ENCODE measurements at regions of chr6 and their contacts with region 1.

Region 1: GRCh38 chr6:131116749-131117360 is 18.4 kb upstream of the AKAP7 start:
- DNase-seq: no peak
- H3K4me3 ChIP-seq: no peak overlapping the region
- H3K27ac ChIP-seq: no peak overlapping the region
- H3K4me1 ChIP-seq: peaks cover 0 to 4% (median 0%) of the 10 kb centered on the region in 4 donors
- H3K27me3 ChIP-seq: no peaks in the 10 kb centered on the region
- CTCF ChIP-seq: peak; percentile 40 to 53 (median 44)
- EP300 ChIP-seq: no peak
- POLR2A ChIP-seq: no peak

Region 2: DNA sequence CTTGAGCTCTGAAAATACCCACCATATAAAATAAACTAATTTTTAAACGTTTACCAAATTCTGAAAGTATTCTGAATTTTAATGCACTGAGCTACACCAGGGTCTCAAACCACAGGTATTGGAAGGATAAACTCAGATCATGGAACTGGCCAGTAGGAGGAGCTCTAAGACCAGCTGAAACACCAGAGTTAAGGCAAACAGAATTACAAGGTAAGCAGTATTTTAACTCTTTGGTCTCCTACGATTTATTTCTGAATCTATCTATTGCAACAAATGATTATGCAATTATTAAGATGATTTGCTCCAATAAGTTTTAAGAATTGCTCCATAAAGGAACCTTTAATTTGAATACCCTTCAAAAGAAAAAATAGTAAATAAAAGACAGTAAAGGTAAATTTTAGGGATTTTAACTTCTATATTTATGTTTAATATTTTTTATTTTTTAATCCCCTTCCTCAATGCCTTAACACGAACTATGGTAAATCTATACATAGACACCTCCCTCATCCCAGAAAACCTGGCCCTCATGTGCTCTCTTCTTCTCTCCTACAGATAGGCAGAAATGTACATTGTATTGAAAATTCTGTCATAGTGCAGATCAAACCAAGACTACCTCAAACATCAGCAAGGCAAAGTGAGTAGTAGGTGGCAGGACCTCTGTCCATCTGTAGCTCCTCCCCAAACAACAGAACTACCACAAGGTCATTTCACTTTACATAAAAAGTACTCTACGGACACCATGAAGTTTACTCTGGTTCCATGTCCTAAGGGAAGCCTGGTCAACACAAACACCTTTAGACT is 231.3 kb before region 1 on chr6:
- intact Hi-C with region 1: loop called (anchors 2 kb)
- DNase-seq: no peak
- H3K4me3 ChIP-seq: no peak overlapping the region
- H3K27ac ChIP-seq: no peak overlapping the region
- H3K4me1 ChIP-seq: no peaks in the 10 kb centered on the region
- H3K27me3 ChIP-seq: no peaks in the 10 kb centered on the region
- CTCF ChIP-seq: peak; percentile 85 to 88 (median 86)
- EP300 ChIP-seq: no peak
- POLR2A ChIP-seq: no peak

Region 3: GRCh38 chr6:130900913-130901312 is 215.9 kb before region 1 on chr6:
- intact Hi-C with region 1: no loop called
- DNase-seq: no peak
- H3K4me3 ChIP-seq: no peak overlapping the region
- H3K27ac ChIP-seq: no peak overlapping the region
- H3K4me1 ChIP-seq: peaks cover 0 to 6% (median 3%) of the 10 kb centered on the region in 4 donors
- H3K27me3 ChIP-seq: no peaks in the 10 kb centered on the region
- CTCF ChIP-seq: no peak
- EP300 ChIP-seq: no peak
- POLR2A ChIP-seq: no peak

Region 4: GRCh38 chr6:131427434-131428058 is 310.7 kb after region 1 on chr6:
- intact Hi-C with region 1: no loop called
- DNase-seq: no peak
- H3K4me3 ChIP-seq: no peak overlapping the region
- H3K27ac ChIP-seq: no peak overlapping the region
- H3K4me1 ChIP-seq: no peaks in the 10 kb centered on the region
- H3K27me3 ChIP-seq: no peaks in the 10 kb centered on the region
- CTCF ChIP-seq: no peak
- EP300 ChIP-seq: no peak
- POLR2A ChIP-seq: no peak

Measured in esophagus muscularis mucosa (tissue), 4 donors.